ENCODE measurements at regions of chr15 and their contacts with region 1.

Region 1: DNA sequence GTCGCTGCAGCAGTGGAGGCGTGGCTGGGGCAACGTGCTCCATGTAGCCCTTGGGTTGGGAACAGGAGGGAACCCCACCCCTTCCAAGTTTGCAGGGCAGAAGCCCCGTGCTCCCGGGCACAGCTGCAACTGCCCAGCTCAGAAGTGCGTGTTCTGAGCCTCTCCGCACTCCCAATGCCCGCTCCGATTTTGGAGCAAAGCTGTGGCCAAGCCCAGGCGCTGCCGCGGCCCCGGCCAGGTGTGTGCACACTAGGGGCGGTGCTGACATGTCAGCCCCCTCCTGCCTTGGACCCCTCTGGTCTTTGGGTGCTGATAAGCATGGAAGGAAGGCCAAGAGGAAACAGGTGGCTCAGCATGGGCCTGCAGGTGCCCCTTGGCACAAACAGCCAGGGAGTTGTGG is 87.6 kb upstream of the TTBK2 start:
- DNase-seq: no peak
- ATAC-seq: no peak

Region 2: GRCh38 chr15:43056696-43057095 is 48.5 kb after region 1 on chr15:
- intact Hi-C with region 1: loop called in 1 of 2 experiments (anchors 2 kb)
- DNase-seq: no peak
- ATAC-seq: no peak

Region 3: DNA sequence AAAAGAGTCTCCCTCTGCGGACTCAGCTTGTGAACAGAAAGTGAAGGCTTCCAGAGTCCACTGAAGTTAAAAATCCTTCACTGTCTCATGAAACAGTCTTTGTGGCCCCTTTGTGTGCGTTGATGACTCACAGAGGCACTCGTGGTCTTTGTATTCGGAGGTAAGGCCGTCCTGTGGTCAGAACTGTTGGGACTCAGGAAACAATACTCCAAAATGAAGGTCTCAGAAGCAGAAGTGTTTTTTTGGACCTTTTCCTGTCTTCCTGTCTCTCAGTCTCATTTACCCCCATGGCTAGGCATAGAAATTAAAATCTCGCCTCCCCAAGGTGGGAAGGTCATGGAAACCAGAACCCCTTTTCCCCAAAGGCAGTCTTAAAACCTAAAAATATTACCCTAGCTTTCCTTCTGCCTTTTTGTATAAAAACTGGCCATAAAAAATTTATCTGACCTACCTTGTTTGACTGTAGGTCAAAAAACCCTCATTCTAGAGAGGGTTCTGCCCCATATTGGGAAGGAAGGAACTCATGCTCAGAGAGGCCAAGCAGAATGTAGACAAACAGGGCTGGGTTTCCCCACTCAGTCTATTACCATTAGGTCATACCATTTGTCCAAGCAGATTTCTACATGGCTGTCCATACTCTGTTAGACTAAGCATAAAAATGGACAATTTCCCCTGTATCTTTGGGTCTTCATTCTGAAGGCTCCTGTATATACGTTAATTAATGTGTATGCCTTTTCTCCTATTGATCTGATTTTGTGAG is 231.8 kb after region 1 on chr15:
- intact Hi-C with region 1: no loop called
- DNase-seq: no peak
- ATAC-seq: no peak